ENCODE measurements at regions of chr3 and their contacts with region 1.

Region 1: GRCh38 chr3:185767002-185767688 is 57.7 kb downstream of the IGF2BP2 start:
- DNase-seq: no peak
- H3K4me3 ChIP-seq: no peak overlapping the region
- H3K27ac ChIP-seq: no peak overlapping the region
- H3K4me1 ChIP-seq: peaks cover 19 to 37% of the 10 kb centered on the region in 2 donors
- H3K27me3 ChIP-seq: no peaks in the 10 kb centered on the region
- CTCF ChIP-seq: no peak
- POLR2A ChIP-seq: no peak

Region 2: DNA sequence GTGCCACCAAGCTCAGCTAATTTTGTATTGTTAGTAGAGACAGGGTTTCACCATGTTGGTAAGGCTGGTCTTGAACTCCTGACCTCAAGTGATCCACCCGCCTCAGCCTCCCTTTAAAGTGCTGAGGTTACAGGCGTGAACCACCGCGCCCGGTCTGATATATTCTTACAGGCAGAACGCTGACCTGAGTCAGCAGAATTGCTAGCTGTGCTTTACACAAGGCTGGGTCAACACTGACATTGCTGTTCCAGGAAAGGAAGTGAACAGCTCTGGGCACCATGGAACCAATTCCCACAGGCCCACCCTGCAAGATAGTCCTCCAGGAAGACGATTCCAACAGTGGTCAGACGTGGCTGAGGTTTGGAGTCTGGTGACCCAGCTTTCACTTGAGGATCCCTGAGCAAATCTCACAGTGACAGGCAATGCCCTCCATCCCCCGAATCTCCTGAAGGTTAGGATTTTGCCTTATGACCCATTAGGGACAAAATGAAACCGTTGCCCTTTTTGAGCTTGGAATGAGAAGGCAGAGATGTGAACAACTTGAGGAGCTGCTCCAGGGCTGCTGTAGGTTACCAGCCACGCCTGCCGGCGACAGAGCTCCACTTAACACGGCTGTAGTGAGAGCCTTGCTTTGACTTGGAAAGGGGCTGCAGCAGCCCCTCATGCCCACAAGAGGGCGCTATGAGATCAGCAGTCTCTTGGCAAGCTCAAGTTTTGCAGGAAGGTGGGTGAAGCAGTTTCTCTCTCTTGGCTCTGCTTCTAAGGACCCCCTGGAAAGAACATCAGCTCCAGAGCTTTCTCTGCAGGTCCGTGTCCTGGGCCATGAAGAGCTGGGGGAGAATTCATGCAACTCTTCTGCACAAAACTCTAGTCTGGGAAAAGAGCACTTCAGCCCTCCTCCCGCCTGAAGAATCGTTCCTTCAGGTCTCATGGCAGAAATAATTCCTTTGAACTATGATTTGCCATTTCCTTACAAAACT is 106.9 kb before region 1 on chr3:
- intact Hi-C with region 1: loop called in 1 of 2 experiments (anchors 5 kb)
- DNase-seq: peak; percentile 75 to 93 (median 84)
- H3K4me3 ChIP-seq: no peak overlapping the region
- H3K27ac ChIP-seq: peak overlapping the region in 3 of 5 donors; percentile 91 to 99 (median 97)
- H3K4me1 ChIP-seq: peaks cover 37 to 57% of the 10 kb centered on the region in 2 donors
- H3K27me3 ChIP-seq: no peaks in the 10 kb centered on the region
- CTCF ChIP-seq: peak; percentile 93 to 98 (median 94)
- POLR2A ChIP-seq: no peak

Region 3: DNA sequence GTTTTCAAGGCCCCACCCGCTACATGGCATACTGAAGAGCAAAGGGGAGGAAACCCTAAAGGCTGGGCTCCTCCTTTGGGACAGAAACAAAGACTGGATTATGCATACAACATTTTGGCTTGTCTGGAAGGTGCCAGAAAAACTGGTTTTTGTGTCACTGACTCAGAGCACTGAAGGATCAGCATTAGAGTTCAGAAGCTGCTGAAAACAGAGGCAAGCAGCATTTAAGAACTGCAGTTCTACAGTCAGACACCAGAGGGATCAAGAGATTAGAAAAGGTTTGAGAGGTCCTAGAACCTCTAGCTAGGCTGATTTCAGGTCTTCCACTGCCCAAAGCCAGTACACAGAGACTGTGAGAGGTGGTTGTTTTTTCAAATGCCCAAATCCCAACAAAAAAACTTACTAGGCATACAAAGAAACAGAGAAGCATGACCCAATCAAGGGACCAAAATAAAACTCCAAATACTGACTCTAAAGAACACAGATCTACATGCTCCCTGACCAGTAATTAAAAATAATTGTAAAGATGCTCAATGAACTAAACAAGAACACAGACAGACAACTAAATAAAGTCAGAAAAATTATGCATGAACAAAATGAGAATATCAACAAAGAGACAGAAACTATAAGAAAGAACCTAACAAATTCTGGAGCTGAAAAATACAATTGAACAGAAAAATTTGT is 89.9 kb before region 1 on chr3:
- intact Hi-C with region 1: loop called (anchors 5 to 10 kb)
- DNase-seq: peak in 2 of 7 donors; percentile 30 to 32
- H3K4me3 ChIP-seq: no peak overlapping the region
- H3K27ac ChIP-seq: no peak overlapping the region
- H3K4me1 ChIP-seq: no peaks in the 10 kb centered on the region
- H3K27me3 ChIP-seq: no peaks in the 10 kb centered on the region
- CTCF ChIP-seq: peak; percentile 43 to 71 (median 60)
- POLR2A ChIP-seq: no peak

Region 4: DNA sequence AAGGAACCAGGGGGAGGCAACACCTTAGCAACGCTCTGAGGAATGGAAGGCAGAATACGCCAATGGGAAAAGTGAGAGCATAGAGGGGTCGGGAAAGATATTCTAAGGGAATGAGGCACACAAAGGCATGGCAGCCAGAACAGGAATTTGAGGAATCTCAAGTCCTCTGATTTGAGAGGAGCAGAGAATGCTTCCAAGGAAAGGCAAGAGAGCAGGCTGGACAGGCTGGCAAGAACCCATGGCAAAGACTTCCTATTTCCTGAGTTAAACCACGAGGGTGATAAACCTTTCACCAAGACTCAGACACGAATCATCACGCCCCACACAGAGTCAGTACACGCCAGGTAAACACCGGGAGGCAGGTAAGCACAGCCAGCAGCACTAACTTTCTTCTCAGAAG is 52.1 kb before region 1 on chr3:
- intact Hi-C with region 1: no loop called
- DNase-seq: no peak
- H3K4me3 ChIP-seq: no peak overlapping the region
- H3K27ac ChIP-seq: no peak overlapping the region
- H3K4me1 ChIP-seq: peaks cover 0 to 13% of the 10 kb centered on the region in 2 donors
- H3K27me3 ChIP-seq: no peaks in the 10 kb centered on the region
- CTCF ChIP-seq: no peak
- POLR2A ChIP-seq: no peak

Region 5: DNA sequence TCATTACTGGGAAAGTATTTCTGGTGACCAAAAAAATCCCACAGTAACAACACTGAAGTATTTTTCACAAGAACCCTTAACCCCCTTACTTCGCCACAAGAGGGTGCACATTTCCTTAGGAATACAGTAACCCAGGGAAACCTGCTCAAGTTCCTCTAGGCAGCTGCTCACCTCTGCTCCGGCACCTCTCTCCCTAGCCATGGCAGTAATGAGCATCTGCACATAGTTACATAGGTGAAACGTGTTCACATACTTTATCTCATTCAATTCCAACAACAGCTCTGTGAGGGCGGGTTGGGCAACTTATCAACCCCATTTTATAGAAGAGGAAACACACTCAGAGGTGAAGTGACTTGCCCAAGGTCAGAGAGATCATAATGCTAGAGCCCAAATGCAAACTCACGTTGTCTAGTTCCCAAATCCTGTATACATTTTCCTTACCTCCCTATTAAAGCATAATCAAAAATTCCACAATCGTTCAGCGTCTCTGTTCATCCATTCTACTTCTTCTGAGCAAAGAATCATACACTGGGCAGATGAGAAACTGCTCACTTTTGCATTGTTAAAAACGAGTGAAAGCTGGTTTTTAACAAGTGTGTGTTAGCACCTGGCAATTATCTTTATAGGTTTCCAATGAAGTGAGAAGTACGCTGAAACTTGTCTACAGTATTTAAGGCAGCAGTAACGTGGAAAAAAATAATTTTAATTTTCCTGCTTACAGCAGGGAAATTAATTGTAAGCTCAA is 33.0 kb before region 1 on chr3:
- intact Hi-C with region 1: loop called (anchors 5 kb)
- DNase-seq: peak; percentile 58 to 81 (median 75)
- H3K4me3 ChIP-seq: peak overlapping the region in 1 of 4 donors; percentile 24
- H3K27ac ChIP-seq: peak overlapping the region in 2 of 5 donors; percentile 23 to 41
- H3K4me1 ChIP-seq: peaks cover 18 to 55% of the 10 kb centered on the region in 2 donors
- H3K27me3 ChIP-seq: no peaks in the 10 kb centered on the region
- CTCF ChIP-seq: peak; percentile 41 to 72 (median 66)
- POLR2A ChIP-seq: no peak

Region 6: GRCh38 chr3:185942907-185943759 is 176.0 kb after region 1 on chr3:
- intact Hi-C with region 1: no loop called
- DNase-seq: peak; percentile 83 to 96 (median 90)
- H3K4me3 ChIP-seq: peak overlapping the region in 1 of 4 donors; percentile 18
- H3K27ac ChIP-seq: peak overlapping the region in 3 of 5 donors; percentile 23 to 53 (median 45)
- H3K4me1 ChIP-seq: peaks cover 0 to 6% of the 10 kb centered on the region in 2 donors
- H3K27me3 ChIP-seq: no peaks in the 10 kb centered on the region
- CTCF ChIP-seq: peak; percentile 89 to 100 (median 94)
- POLR2A ChIP-seq: no peak

Measured in adrenal gland (tissue), 19 donors.